Panc1 (cell line): ENCODE measurements at regions of chr1 and their contacts with region 1.

Region 1: DNA sequence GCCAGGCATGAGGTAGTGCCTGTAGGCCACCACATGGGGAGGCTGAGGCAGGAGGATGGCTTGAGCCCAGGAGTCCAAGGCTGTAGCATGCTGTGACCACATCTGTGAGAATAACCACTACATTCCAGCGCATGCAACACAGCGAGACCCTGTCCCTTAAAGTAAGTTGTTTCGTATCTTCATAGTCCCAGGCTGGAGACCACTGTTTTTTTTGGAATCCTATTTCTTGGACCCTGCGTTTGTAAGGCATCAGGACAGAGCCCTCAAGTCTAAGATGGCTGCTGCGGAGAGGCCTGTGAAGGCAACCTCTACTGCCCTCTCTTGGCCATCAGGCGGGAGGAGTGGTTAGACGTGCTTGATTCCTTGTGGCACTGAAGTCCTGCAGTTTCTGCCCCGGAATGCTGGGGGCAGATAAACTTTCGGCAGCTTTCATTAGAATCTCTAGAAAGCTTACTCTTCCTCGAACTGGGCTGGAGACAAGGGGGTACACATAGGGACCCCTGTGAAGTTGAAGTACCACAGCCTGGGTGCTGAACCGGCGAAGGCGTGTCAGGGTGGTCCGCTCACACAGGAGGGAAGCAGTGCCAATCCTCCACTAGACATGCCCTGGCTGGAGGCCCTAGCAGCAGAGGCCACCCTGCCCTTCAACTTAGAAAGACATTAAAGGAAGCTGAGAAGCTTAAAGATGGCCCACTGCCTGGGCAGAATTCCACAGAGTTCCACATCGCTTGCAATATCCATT is 36.6 kb downstream of the RABIF start:
- DNase-seq: peak; percentile 39
- ATAC-seq: peak; percentile 96
- H3K4me3 ChIP-seq: no peak overlapping the region
- H3K27ac ChIP-seq: no peak overlapping the region
- H3K4me1 ChIP-seq: no peaks in the 10 kb centered on the region
- H3K27me3 ChIP-seq: no peaks in the 10 kb centered on the region
- CTCF ChIP-seq: peak; percentile 90

Region 2: GRCh38 chr1:202862679-202863560 is 10.6 kb after region 1 on chr1:
- CTCF ChIA-PET with region 1: interaction called, 13 read pairs
- POLR2A ChIA-PET with region 1: no interaction called
- in situ Hi-C with region 1: no loop called
- intact Hi-C with region 1: no loop called
- DNase-seq: no peak
- ATAC-seq: no peak
- H3K4me3 ChIP-seq: no peak overlapping the region
- H3K27ac ChIP-seq: no peak overlapping the region
- H3K4me1 ChIP-seq: no peaks in the 10 kb centered on the region
- H3K27me3 ChIP-seq: peaks cover 5% of the 10 kb centered on the region
- CTCF ChIP-seq: no peak